ENCODE measurements at regions of chr10 and their contacts with region 1.

Region 1: DNA sequence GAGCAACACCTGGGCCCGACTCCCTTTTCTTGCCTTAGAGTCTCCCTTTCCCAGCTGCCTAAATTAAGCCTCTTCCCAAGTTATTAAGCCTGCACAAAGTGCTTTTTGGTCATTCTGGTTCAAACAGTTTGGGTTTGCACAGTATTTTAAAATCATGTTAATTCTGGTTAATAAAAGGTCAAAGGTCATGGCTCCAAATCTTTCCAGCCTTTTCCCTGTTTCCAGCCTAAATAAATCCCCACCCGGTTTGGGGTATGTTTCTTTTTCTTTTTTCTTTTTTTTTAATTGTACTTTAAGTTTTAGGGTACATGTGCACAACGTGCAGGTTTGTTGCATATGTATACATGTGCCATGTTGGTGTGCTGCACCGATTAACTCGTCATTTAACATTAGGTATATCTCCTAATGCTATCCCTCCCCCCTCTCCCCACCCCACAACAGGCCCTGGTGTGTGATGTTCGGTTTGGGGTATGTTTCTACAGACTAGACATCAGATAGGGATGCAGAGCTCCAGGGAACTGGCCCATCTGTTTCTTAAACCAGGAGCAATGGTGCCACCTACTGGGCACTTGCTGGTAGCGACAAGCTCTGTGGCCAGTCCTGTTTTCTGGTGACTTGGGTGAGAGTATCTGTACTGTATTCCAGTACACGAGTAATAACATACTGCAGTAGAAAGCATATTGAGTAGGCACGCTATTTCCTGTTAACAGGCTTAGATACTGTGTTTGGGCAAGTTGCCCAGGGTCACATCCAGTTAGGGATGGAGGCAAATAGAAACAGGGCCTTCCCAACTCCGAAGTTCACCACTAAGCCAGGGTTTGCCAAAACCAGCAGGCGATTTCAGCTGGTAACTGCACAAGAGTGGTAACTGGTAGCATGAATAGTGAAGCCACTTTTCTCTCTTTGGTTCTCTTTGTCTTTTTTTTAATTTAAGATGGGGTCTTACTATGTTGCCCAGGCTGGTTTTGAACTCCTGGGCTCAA is 60.6 kb upstream of the TRIM8 start:
- DNase-seq: peak; percentile 59 to 90 (median 75)
- ATAC-seq: peak; percentile 91 to 98 (median 96)
- H3K4me3 ChIP-seq: no peak overlapping the region
- H3K4me3 Mint-ChIP-seq: no peak overlapping the region
- H3K27ac ChIP-seq: no peak overlapping the region
- H3K27ac Mint-ChIP-seq: no peak overlapping the region
- H3K4me1 ChIP-seq: peaks cover 0 to 5% of the 10 kb centered on the region in 2 experiments
- H3K4me1 Mint-ChIP-seq: peaks cover 11 to 16% (median 12%) of the 10 kb centered on the region in 3 donors
- H3K27me3 ChIP-seq: no peaks in the 10 kb centered on the region
- H3K27me3 Mint-ChIP-seq: no peaks in the 10 kb centered on the region

Region 2: DNA sequence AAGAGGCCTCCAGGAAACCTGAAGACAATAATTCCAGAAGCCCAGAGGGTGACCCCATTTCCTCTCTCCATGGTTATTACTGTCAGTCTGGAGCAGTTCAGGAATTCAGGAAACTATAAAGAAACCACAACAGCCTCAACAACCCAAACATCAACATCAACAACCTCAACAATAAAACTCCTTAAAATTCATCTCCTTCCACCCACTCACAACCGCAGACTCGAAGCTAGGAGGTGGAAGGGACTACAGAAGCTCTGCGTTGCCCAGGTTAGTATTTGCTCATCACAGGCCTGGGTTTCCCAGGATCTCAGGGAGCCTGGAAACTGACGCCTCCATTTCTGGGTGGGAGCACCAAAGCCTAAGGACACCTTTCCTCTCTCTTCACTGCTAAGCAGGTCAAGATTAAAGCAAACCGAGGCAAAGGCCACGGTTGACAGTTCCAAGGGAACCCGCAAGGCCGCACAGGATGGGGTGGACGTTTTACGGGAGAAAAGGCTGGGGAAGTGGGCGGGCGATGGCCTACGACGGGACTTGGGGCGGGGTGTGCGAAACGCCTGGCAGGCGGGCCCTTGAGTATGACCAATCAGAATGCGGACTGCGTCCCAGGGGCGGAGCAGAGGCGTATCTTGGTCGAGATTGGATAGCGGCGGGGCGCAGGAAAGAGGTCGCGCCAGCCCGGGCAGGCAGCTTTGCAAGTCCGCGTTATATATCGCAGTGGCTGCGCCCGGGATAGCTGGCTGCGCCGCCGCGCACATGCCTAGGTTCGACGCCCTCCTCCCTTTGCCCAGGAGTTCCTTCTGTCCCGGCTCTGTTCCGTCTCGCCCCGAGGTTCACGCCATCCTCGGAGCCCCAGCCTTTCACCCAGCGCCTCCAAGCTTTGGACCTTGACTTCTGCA is 357.8 kb before region 1 on chr10 and contains the start of gene ELOVL3:
- CTCF ChIA-PET with region 1: interaction called in 1 of 2 experiments, 31 read pairs
- POLR2A ChIA-PET with region 1: interaction called in 1 of 2 experiments, 3 read pairs
- DNase-seq: peak; percentile 62 to 91 (median 80)
- ATAC-seq: peak; percentile 88 to 94 (median 92)
- H3K4me3 ChIP-seq: peak within 1 kb of the TSS; percentile 17 to 39
- H3K4me3 Mint-ChIP-seq: peak within 1 kb of the TSS; percentile 71 to 75 (median 71)
- H3K27ac ChIP-seq: no peak within 1 kb of the TSS
- H3K27ac Mint-ChIP-seq: peak within 1 kb of the TSS in 1 of 2 donors; percentile 17
- H3K4me1 ChIP-seq: peaks cover 2 to 27% of the 10 kb centered on the region in 2 experiments
- H3K4me1 Mint-ChIP-seq: peaks cover 18 to 25% (median 24%) of the 10 kb centered on the region in 3 donors
- H3K27me3 ChIP-seq: peaks cover 2 to 61% of the 10 kb centered on the region in 2 experiments
- H3K27me3 Mint-ChIP-seq: peaks cover 28 to 49% of the 10 kb centered on the region in 2 donors
- total RNA-seq, gene ELOVL3: not detected

Region 3: GRCh38 chr10:102503281-102504220 is 80.2 kb before region 1 on chr10 and contains the start of gene SUFU:
- CTCF ChIA-PET with region 1: interaction called, 3 to 48 read pairs
- POLR2A ChIA-PET with region 1: interaction called in 1 of 2 experiments, 3 read pairs
- DNase-seq: peak; percentile 94 to 100 (median 97)
- ATAC-seq: peak; percentile 69 to 74 (median 72)
- H3K4me3 ChIP-seq: peak within 1 kb of the TSS; percentile 88 to 100
- H3K4me3 Mint-ChIP-seq: no peak within 1 kb of the TSS
- H3K27ac ChIP-seq: peak within 1 kb of the TSS; percentile 78
- H3K27ac Mint-ChIP-seq: peak within 1 kb of the TSS; percentile 77 to 80
- H3K4me1 ChIP-seq: peaks cover 24 to 30% of the 10 kb centered on the region in 2 experiments
- H3K4me1 Mint-ChIP-seq: peaks cover 41 to 45% (median 44%) of the 10 kb centered on the region in 3 donors
- H3K27me3 ChIP-seq: no peaks in the 10 kb centered on the region
- H3K27me3 Mint-ChIP-seq: no peaks in the 10 kb centered on the region
- total RNA-seq, gene SUFU: 13.2 to 16.4 (median 15.4) TPM

Region 4: DNA sequence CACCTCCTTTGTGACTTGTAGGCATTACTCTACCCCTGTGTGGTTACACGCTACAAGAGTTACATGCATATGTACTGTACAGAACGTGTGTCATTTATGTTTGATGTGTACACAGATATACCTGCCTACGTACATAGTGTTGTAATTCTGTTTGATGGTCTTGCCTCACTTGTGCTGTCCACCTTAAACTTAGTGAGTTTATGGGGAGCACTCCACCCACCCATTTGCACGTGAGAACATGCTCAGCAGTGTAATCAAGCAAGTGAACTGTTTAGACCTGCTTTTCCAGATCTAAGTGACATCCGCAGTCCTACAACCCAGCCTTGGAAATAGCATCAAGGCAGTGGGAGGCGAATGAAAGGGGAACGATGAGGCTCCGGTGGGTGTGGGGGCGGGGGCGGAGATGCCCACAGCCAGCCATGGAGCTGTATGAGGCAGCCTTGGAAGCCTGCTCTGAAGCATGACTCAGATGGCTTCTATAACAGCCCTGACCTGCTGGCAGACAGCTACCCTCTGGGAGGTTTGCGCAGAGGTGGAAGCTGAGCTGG is 27.9 kb before region 1 on chr10:
- CTCF ChIA-PET with region 1: interaction called, 7 to 13 read pairs
- POLR2A ChIA-PET with region 1: no interaction called
- DNase-seq: no peak
- ATAC-seq: no peak
- H3K4me3 ChIP-seq: no peak overlapping the region
- H3K4me3 Mint-ChIP-seq: no peak overlapping the region
- H3K27ac ChIP-seq: no peak overlapping the region
- H3K27ac Mint-ChIP-seq: no peak overlapping the region
- H3K4me1 ChIP-seq: no peaks in the 10 kb centered on the region
- H3K4me1 Mint-ChIP-seq: peaks cover 4 to 11% (median 7%) of the 10 kb centered on the region in 3 donors
- H3K27me3 ChIP-seq: no peaks in the 10 kb centered on the region
- H3K27me3 Mint-ChIP-seq: no peaks in the 10 kb centered on the region

Region 5: DNA sequence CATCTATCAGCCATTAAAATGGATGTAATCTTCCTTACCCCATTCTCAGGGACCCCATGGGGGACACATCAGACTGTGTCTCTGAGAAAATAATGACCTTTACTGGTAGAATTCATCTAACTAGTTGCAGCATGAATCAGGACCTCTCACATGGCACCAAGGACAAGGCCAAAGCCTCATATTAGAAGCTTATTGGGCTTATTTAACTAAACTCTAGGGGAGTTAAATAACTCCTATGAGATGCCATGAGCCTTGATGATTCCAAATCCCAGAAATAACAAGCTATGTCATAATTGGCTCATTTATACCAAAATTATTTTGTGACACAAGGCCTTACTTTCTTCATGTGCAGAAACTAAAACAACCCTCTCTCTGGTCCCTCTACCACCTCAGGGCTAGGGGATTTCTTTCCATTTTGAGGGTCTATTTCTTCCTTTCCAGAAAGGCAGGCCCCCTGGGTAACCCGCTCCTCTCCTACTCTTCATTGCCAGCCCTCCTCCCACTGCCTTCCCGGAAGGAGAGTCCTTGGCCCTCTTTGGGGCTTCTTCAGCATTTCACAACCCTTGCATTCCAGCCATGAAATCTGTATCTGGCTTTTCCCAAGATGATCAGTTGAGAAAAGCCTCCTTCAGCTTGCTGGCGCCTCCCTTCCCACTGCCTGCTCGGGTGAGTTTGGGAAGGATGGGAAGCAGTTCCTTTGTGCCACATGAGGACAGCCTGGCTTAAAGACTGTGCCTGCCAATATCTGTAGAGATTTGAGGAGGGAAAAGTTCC is 18.7 kb after region 1 on chr10:
- CTCF ChIA-PET with region 1: no interaction called
- POLR2A ChIA-PET with region 1: no interaction called
- DNase-seq: no peak
- ATAC-seq: no peak
- H3K4me3 ChIP-seq: no peak overlapping the region
- H3K4me3 Mint-ChIP-seq: no peak overlapping the region
- H3K27ac ChIP-seq: no peak overlapping the region
- H3K27ac Mint-ChIP-seq: no peak overlapping the region
- H3K4me1 ChIP-seq: no peaks in the 10 kb centered on the region
- H3K4me1 Mint-ChIP-seq: no peaks in the 10 kb centered on the region
- H3K27me3 ChIP-seq: no peaks in the 10 kb centered on the region
- H3K27me3 Mint-ChIP-seq: no peaks in the 10 kb centered on the region